ENCODE measurements at regions of chr10 and their contacts with region 1.

Region 1: DNA sequence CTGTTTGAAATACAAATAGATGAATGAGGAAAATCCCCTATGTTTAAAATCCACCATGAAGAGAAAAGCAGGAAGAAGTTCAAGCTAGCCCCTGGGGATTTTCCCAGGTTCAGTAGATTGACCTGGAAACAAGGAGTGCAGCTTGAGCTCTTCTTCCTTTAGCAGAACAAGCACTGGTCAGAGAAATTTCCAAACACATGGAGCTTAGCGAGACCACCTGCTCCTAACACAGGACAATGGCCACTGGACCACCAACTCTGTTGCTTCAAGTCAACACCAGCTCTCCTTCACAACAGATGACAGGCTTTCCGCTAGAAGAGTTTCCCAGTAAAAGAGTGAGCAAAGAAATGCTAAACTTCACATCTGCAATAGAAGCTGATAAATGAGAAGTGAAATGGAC is 9.4 kb upstream of the FBXW4 start:
- DNase-seq: no peak
- H3K4me3 Mint-ChIP-seq: no peak overlapping the region
- H3K27ac Mint-ChIP-seq: no peak overlapping the region
- H3K4me1 Mint-ChIP-seq: peaks cover 36% of the 10 kb centered on the region
- H3K27me3 Mint-ChIP-seq: peaks cover 22% of the 10 kb centered on the region

Region 2: DNA sequence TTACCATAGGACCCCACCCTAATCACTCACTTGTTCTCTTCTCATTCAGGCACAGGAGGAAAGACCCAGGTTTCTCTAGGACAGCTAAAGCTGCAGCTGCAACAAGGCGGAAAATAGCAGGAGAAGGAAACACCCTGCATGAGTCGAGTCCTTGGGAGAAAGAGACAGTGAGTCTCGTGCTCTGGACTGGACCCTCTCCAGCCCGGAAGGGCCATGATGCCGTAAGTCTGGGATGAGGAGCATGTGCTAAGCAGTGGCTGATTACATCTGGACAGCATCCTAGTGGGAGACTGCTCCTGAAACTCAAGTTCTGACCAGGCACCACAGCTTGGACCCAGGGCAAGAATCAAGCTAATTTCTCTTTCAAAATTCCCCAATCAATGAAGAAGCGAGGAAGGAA is 48.8 kb before region 1 on chr10:
- CTCF ChIA-PET with region 1: no interaction called
- POLR2A ChIA-PET with region 1: no interaction called
- DNase-seq: no peak
- H3K4me3 Mint-ChIP-seq: no peak overlapping the region
- H3K27ac Mint-ChIP-seq: no peak overlapping the region
- H3K4me1 Mint-ChIP-seq: no peaks in the 10 kb centered on the region
- H3K27me3 Mint-ChIP-seq: no peaks in the 10 kb centered on the region

Region 3: DNA sequence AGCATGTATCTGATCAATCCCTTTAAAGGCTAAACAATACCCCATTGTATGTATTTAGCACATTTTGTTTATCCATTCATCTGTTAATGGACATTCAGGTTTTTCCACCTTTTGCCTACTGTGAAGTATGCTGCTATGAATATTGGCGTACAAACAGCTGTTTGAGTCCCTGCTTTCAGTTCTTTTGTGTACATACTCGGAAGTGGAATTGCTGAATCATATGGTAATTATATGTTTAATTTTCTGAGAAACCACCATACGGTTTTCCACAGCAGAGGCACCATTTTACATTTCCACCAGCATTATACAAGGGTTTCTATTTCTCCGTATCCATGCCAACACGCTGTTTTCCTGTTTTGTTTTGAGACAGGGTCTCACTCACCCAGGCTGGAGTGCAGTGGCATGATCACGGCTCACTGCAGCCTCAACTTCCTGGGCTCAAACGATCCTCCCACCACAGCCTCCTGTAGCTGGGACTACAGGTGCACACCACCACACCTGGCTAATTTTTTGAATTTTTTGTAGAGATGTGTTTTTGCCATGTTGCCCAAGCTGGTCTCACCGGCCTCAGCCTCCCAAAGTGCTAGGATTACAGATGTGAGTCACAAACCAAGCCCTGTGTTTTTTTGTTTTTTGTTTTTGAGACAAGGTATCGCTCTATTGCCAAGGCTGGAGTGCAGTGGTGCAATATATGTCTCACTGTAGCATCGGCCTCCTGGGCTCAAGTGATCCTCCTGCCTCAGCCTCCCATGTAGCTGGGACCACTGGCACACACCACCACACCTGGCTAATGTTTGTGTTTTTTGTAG is 12.7 kb after region 1 on chr10:
- CTCF ChIA-PET with region 1: interaction called, 3 read pairs
- POLR2A ChIA-PET with region 1: interaction called, 13 read pairs
- DNase-seq: peak; percentile 37
- H3K4me3 Mint-ChIP-seq: no peak overlapping the region
- H3K27ac Mint-ChIP-seq: peak overlapping the region; percentile 84
- H3K4me1 Mint-ChIP-seq: peaks cover 11% of the 10 kb centered on the region
- H3K27me3 Mint-ChIP-seq: peaks cover 4% of the 10 kb centered on the region

Measured in activated CD4-positive, alpha-beta memory T cell treated with anti-CD3 and anti-CD28 coated beads, Interleukin-2, amount 10 ng/mL, durations not matched to agents 7 days and 5 days (primary cell).